ENCODE measurements at regions of chr1 and their contacts with region 1.

Region 1: GRCh38 chr1:18962121-18962721 is 5.7 kb upstream of the IFFO2 start:
- DNase-seq: no peak
- H3K4me3 ChIP-seq: no peak overlapping the region
- H3K27ac ChIP-seq: peak overlapping the region; percentile 90
- H3K4me1 ChIP-seq: peaks cover 21% of the 10 kb centered on the region
- H3K27me3 ChIP-seq: no peaks in the 10 kb centered on the region
- CTCF ChIP-seq: no peak
- POLR2A ChIP-seq: no peak

Region 2: GRCh38 chr1:18608534-18608933 is 353.7 kb before region 1 on chr1:
- intact Hi-C with region 1: no loop called
- DNase-seq: no peak
- H3K4me3 ChIP-seq: no peak overlapping the region
- H3K27ac ChIP-seq: no peak overlapping the region
- H3K4me1 ChIP-seq: no peaks in the 10 kb centered on the region
- H3K27me3 ChIP-seq: no peaks in the 10 kb centered on the region
- CTCF ChIP-seq: no peak
- POLR2A ChIP-seq: no peak

Region 3: GRCh38 chr1:18913065-18913835 is 49.0 kb before region 1 on chr1:
- intact Hi-C with region 1: loop called (anchors 5 kb)
- DNase-seq: no peak
- H3K4me3 ChIP-seq: no peak overlapping the region
- H3K27ac ChIP-seq: peak overlapping the region; percentile 31
- H3K4me1 ChIP-seq: peaks cover 11% of the 10 kb centered on the region
- H3K27me3 ChIP-seq: no peaks in the 10 kb centered on the region
- CTCF ChIP-seq: peak; percentile 66 to 93 (median 86)
- POLR2A ChIP-seq: no peak

Region 4: GRCh38 chr1:19081218-19081893 is 119.1 kb after region 1 on chr1:
- intact Hi-C with region 1: no loop called
- DNase-seq: no peak
- H3K4me3 ChIP-seq: peak overlapping the region in 1 of 2 donors; percentile 8
- H3K27ac ChIP-seq: peak overlapping the region; percentile 75
- H3K4me1 ChIP-seq: peaks cover 50% of the 10 kb centered on the region
- H3K27me3 ChIP-seq: no peaks in the 10 kb centered on the region
- CTCF ChIP-seq: no peak
- POLR2A ChIP-seq: no peak